ENCODE measurements at regions of chr11 and their contacts with region 1.

Region 1: GRCh38 chr11:118145285-118146227 is 7.1 kb downstream of the SCN4B start:
- DNase-seq: peak; percentile 68
- ATAC-seq: peak; percentile 93
- H3K4me3 ChIP-seq: peak overlapping the region; percentile 60 to 80 (median 61); a peak in 5 of 6 replicates
- H3K27ac ChIP-seq: no peak overlapping the region
- H3K4me1 ChIP-seq: peaks cover 18% of the 10 kb centered on the region; the same call in 1 of the 2 replicates
- H3K27me3 ChIP-seq: peaks cover 2 to 52% of the 10 kb centered on the region in 2 experiments; a peak in 3 of 5 replicates
- CTCF ChIP-seq: peak; percentile 98
- EP300 ChIP-seq: no peak
- POLR2A ChIP-seq: no peak
- RAD21 ChIP-seq: peak; percentile 99

Region 2: GRCh38 chr11:118010738-118011461 is 134.7 kb before region 1 on chr11:
- CTCF ChIA-PET with region 1: no interaction called
- POLR2A ChIA-PET with region 1: no interaction called
- in situ Hi-C with region 1: no loop called
- intact Hi-C with region 1: no loop called
- DNase-seq: no peak
- ATAC-seq: no peak
- H3K4me3 ChIP-seq: no peak overlapping the region
- H3K27ac ChIP-seq: no peak overlapping the region
- H3K4me1 ChIP-seq: peaks cover 15% of the 10 kb centered on the region
- H3K27me3 ChIP-seq: peaks cover 4 to 31% of the 10 kb centered on the region in 2 experiments; a peak in 3 of 5 replicates
- CTCF ChIP-seq: no peak
- EP300 ChIP-seq: no peak
- POLR2A ChIP-seq: no peak
- RAD21 ChIP-seq: no peak

Region 3: DNA sequence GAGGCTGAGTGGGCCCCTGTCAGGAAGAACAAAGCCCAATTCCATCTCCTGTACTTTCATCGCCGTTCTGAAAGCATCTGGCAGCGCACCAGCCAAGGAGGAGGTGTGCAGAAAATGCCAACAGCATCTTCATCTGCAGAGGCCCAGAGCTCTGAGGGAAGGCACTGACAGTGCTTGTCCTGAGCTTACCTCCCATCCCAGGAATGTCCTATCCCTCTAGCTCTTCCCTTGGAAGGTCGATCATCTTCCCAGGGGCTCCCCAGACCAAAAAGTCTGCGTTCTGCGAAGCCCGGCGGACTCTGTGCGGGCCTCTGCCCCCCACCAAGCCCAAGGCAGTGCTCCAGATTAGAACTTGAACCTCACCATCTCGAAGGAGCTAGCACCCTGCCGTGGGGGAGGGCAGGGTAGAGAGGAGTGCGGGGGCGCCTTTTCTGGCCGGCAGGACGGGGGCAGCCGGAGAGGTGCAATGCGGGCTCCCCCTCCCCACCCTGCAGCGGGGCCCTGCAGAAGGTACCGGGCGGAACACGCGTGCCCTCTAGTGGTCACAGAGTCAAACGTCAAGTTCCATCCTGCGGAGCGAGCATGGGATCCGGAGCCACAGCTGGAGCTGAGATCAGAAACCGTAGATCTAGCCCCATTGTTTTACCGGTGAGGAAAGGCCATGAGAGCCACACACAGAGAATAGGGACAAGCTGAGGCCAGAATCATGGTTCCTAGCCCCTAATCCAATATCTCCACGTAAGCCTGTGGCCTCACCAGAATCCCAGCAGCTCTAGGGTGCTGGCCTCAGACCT is 25.9 kb after region 1 on chr11:
- CTCF ChIA-PET with region 1: interaction called, 14 read pairs
- POLR2A ChIA-PET with region 1: no interaction called
- in situ Hi-C with region 1: no loop called
- intact Hi-C with region 1: loop called (anchors 1 kb)
- DNase-seq: peak; percentile 56
- ATAC-seq: peak; percentile 79
- H3K4me3 ChIP-seq: no peak overlapping the region; a peak in 1 of 6 replicates
- H3K27ac ChIP-seq: no peak overlapping the region
- H3K4me1 ChIP-seq: peaks cover 34% of the 10 kb centered on the region
- H3K27me3 ChIP-seq: peaks cover 4 to 59% of the 10 kb centered on the region in 2 experiments
- CTCF ChIP-seq: peak; percentile 97
- EP300 ChIP-seq: no peak
- POLR2A ChIP-seq: no peak
- RAD21 ChIP-seq: peak; percentile 69

Region 4: DNA sequence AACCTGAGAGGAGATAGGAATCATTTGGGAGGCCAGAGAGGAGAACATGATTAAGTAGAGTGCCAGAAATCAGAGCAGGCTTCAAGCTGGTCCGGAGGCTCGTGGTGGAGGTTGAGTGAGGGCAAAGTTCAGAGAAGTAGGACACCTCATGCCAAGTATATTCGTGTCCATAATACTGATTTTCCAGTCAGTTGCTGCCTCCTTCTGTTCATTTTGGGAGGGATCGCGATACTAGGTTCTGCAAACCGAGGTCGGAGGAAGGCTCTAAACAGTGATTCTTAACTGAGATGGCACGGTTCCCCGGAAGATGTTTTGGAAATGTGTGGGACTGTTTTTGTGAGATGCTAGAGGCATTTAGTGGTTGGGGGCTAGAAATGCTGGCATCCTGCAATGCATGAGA is 145.4 kb after region 1 on chr11:
- CTCF ChIA-PET with region 1: interaction called, 21 read pairs
- POLR2A ChIA-PET with region 1: no interaction called
- in situ Hi-C with region 1: loop called (anchors 5 kb)
- intact Hi-C with region 1: loop called (anchors 1 kb)
- DNase-seq: peak; percentile 74
- ATAC-seq: peak; percentile 83
- H3K4me3 ChIP-seq: no peak overlapping the region
- H3K27ac ChIP-seq: no peak overlapping the region
- H3K4me1 ChIP-seq: peaks cover 12% of the 10 kb centered on the region
- H3K27me3 ChIP-seq: no peaks in the 10 kb centered on the region
- CTCF ChIP-seq: peak; percentile 90
- EP300 ChIP-seq: no peak
- POLR2A ChIP-seq: no peak
- RAD21 ChIP-seq: peak; percentile 89

Region 5: DNA sequence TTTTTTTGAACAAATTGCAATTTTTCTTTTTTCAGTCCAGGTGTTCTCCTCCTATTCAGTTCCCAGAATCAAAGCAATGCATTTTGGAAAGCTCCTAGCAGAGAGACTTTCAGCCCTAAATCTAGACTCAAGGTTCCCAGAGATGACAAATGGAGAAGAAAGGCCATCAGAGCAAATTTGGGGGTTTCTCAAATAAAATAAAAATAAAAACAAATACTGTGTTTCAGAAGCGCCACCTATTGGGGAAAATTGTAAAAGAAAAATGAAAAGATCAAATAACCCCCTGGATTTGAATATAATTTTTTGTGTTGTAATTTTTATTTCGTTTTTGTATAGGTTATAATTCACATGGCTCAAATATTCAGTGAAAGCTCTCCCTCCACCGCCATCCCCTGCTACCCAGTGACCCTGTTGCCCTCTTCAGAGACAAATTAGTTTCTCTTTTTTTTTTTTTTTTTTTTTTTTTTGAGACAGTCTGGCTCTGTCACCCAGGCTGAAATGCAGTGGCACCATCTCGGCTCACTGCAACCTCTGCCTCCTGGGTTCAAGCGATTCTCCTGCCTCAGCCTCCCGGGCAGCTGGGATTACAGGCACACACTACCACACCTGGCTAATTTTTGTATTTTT is 207.6 kb after region 1 on chr11:
- CTCF ChIA-PET with region 1: interaction called, 9 read pairs
- POLR2A ChIA-PET with region 1: no interaction called
- in situ Hi-C with region 1: loop called (anchors 5 kb)
- intact Hi-C with region 1: no loop called
- DNase-seq: no peak
- ATAC-seq: no peak
- H3K4me3 ChIP-seq: no peak overlapping the region
- H3K27ac ChIP-seq: no peak overlapping the region
- H3K4me1 ChIP-seq: no peaks in the 10 kb centered on the region
- H3K27me3 ChIP-seq: peaks cover 1 to 22% of the 10 kb centered on the region in 2 experiments; a peak in 3 of 5 replicates
- CTCF ChIP-seq: peak; percentile 19
- EP300 ChIP-seq: no peak
- POLR2A ChIP-seq: no peak
- RAD21 ChIP-seq: no peak